ENCODE measurements at regions of chr9 and their contacts with region 1.

Region 1: DNA sequence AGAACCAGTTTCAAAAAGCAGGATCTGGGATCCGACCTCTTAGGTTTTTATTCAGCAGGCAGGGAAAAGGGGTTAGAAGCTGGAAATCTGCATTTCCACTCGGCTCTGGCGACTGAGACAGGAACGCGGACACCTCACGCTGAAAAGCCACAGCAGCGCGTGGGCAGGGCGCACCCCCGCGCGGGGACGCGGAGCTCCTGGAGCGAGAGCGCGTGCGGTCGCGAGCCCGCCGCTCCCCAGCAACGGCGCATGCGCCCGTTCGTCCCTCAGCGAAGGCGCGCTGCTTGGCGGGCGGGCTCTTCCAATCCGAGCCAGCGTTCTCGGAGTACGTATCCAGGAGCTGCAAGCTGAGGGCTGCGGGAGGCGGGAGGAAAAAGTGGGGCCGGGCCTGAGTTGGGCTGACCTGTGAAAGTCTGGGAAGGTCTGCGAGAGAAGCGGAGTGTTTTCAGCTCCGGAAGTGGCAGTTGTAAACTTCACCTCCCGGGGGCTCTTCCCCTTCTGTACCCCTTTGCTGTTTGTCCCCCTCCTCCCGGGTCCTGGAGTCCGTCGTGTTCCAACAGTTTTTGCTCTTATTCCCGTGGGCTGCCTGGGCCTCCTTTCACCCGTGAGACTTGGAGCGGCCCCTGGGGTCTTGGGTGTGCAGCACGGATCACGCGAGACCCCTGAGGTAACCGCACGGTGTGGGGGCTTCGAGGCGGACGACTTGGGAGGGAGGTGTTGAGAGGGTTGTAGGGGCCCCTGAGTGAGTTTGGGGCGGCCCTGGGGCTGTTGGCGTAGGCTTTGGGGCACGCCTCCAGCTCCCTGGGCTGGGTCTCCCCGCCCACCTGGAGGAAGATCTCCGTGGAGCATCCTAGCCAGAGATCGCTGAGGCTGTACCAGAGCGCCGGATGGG is at the start of gene CCDC171:
- DNase-seq: peak; percentile 94
- H3K4me3 ChIP-seq: peak within 1 kb of the TSS; percentile 56 to 92 (median 79)
- H3K27ac ChIP-seq: peak within 1 kb of the TSS; percentile 2
- H3K4me1 ChIP-seq: peaks cover 8% of the 10 kb centered on the region
- H3K27me3 ChIP-seq: no peaks in the 10 kb centered on the region
- CTCF ChIP-seq: no peak
- POLR2A ChIP-seq: peak; percentile 93
- total RNA-seq, gene CCDC171: 1.4 and 1.6 TPM in 2 replicates

Region 2: DNA sequence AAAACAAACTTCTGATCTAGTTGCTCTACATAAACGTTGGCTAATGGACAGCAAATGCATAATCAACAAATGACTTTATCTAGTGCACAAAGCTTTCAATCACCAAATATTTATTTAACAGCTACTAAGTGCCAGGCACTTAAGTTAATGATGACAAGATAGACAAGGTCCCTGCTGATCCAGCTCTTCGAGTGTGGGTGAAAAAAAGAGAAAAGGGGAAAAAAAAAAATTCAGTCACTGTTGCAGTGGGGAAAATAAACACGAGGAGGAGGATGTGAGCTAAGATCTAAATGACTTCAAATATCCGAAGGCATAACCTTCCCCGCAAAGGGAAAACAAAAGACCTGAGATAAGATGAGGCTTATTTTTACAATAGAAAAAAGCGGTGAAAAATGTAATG is 51.7 kb before region 1 on chr9:
- CTCF ChIA-PET with region 1: interaction called, 10 read pairs
- POLR2A ChIA-PET with region 1: no interaction called
- dilution Hi-C with region 1: no loop called
- intact Hi-C with region 1: no loop called
- DNase-seq: peak; percentile 72
- H3K4me3 ChIP-seq: no peak overlapping the region
- H3K27ac ChIP-seq: no peak overlapping the region
- H3K4me1 ChIP-seq: peaks cover 7% of the 10 kb centered on the region
- H3K27me3 ChIP-seq: no peaks in the 10 kb centered on the region
- CTCF ChIP-seq: no peak
- POLR2A ChIP-seq: no peak

Region 3: GRCh38 chr9:15510789-15511575 is 41.9 kb before region 1 on chr9 and contains the start of gene PSIP1:
- CTCF ChIA-PET with region 1: interaction called, 5 read pairs
- POLR2A ChIA-PET with region 1: interaction called, 9 read pairs
- dilution Hi-C with region 1: no loop called
- intact Hi-C with region 1: loop called (anchors 1 kb)
- DNase-seq: peak; percentile 87
- H3K4me3 ChIP-seq: peak within 1 kb of the TSS; percentile 76 to 91 (median 77)
- H3K27ac ChIP-seq: peak within 1 kb of the TSS; percentile 99
- H3K4me1 ChIP-seq: peaks cover 19% of the 10 kb centered on the region
- H3K27me3 ChIP-seq: no peaks in the 10 kb centered on the region
- CTCF ChIP-seq: no peak
- POLR2A ChIP-seq: peak; percentile 78
- total RNA-seq, gene PSIP1: 69.5 and 76.7 TPM in 2 replicates

Region 4: DNA sequence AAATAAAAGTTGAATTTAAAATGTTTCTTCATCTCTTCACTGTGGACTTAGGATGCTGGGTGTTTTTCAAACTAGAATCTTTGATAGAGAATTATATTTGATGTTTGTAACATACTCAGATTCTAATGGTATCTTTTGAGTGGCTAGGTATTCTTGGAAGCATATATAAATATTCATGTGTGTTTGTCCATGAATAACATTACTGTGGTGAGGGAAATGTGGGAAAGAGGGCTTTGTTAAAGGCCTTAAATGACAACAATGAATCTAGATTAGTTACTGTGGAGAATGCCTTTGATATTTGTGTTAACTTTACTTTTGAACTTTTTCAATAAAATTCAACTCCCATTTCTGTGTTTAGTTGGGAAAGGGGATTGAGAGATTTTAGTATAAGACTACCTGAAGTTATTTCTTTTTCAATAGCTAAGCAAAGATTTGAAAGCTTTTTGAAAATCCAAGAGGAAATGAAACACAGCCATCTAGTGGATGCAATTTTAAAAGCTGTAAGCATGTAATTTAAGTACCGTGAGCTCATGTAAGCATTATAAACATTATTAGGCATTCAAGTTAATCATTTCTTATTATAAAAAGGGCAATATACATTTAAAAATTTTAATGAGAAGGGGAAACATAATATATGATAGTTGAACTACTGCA is 69.6 kb after region 1 on chr9:
- CTCF ChIA-PET with region 1: interaction called, 11 read pairs
- POLR2A ChIA-PET with region 1: no interaction called
- dilution Hi-C with region 1: no loop called
- intact Hi-C with region 1: no loop called
- DNase-seq: peak; percentile 36
- H3K4me3 ChIP-seq: no peak overlapping the region
- H3K27ac ChIP-seq: no peak overlapping the region
- H3K4me1 ChIP-seq: no peaks in the 10 kb centered on the region
- H3K27me3 ChIP-seq: no peaks in the 10 kb centered on the region
- CTCF ChIP-seq: peak; percentile 12 to 18
- POLR2A ChIP-seq: no peak

Region 5: GRCh38 chr9:15642369-15642962 is 89.6 kb after region 1 on chr9:
- CTCF ChIA-PET with region 1: interaction called, 3 read pairs
- POLR2A ChIA-PET with region 1: no interaction called
- dilution Hi-C with region 1: no loop called
- intact Hi-C with region 1: loop called (anchors 10 kb)
- DNase-seq: peak; percentile 59
- H3K4me3 ChIP-seq: no peak overlapping the region
- H3K27ac ChIP-seq: no peak overlapping the region
- H3K4me1 ChIP-seq: peaks cover 8% of the 10 kb centered on the region
- H3K27me3 ChIP-seq: no peaks in the 10 kb centered on the region
- CTCF ChIP-seq: peak; percentile 24 to 25
- POLR2A ChIP-seq: no peak